Activated CD8-positive, alpha-beta memory T cell treated with anti-CD3 and anti-CD28 coated beads, Interleukin-2, amount 10 ng/mL, durations not matched to agents 7 days and 5 days (primary cell): ENCODE measurements at regions of chr19 and their contacts with region 1.

Region 1: DNA sequence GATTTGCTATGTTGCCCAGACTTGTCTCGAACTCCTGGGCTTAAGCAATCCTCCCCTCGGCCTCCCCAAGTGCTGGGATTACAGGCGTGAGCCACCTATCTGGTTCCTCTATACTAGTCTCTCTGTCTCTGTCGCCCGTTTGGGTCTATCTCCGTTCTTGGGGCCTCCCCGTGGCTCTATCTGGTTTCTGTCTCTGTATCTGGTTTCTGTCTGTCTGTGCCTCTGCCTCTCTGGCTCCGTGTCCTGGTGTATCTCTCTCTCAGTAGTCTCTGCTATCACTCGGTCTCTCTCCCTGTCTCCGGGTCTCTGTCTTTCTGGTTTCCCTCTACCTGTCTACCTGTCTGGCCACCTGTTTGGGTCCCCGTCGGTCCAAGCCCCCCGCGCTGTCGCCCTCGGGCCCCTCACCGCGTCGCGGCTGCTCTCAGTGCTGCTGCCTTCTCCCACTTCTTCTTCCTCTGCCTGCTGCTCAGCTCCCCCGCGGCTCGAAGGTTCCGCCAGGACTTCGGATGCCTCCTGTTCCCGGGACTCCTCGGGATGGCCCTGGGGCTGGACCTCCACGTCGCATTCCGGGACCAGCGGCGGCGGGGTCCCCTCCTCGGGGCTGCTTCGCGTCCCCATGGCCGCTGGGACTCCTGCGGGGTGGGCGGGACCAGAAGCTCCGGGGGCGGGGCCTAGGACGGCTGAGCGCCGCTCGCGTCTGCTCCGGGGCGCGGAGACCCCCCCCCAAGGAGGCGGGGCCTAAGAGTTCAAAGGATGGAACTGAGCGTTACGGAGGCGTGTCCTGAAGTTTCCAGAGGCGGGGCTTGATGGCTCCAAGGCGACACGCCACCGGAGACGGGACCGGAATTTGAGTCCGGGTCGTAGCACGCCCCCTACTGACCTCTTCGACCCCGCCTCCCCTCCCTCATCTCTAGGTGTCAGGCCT is 783 bp downstream of the PHLDB3 start:
- DNase-seq: peak; percentile 99
- ATAC-seq: peak; percentile 95
- H3K4me3 Mint-ChIP-seq: peak overlapping the region; percentile 97
- H3K27ac Mint-ChIP-seq: peak overlapping the region; percentile 91
- H3K4me1 Mint-ChIP-seq: peaks cover 21% of the 10 kb centered on the region
- H3K27me3 Mint-ChIP-seq: no peaks in the 10 kb centered on the region

Region 2: DNA sequence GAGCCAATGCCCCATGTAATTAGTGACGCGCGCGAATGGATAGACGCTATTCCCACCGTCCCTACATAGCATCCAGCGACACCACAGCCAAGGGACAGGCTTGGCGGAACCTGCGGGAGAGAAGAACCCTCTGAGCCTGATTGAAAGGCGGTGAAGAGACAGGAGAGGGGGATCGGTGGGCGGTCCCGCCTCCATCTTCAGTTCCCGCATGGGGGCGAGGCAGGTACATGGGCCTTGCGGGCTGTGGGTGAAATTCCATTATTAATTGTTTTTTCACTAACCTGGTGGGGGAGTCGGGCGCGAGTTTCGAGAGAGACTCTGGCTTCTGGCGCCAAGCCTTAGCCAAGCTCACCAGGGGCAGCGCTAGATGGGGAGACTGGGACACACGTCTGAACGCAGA is 97.5 kb before region 1 on chr19:
- CTCF ChIA-PET with region 1: no interaction called
- DNase-seq: no peak
- ATAC-seq: no peak
- H3K4me3 Mint-ChIP-seq: no peak overlapping the region
- H3K27ac Mint-ChIP-seq: no peak overlapping the region
- H3K4me1 Mint-ChIP-seq: no peaks in the 10 kb centered on the region
- H3K27me3 Mint-ChIP-seq: peaks cover 9% of the 10 kb centered on the region

Region 3: DNA sequence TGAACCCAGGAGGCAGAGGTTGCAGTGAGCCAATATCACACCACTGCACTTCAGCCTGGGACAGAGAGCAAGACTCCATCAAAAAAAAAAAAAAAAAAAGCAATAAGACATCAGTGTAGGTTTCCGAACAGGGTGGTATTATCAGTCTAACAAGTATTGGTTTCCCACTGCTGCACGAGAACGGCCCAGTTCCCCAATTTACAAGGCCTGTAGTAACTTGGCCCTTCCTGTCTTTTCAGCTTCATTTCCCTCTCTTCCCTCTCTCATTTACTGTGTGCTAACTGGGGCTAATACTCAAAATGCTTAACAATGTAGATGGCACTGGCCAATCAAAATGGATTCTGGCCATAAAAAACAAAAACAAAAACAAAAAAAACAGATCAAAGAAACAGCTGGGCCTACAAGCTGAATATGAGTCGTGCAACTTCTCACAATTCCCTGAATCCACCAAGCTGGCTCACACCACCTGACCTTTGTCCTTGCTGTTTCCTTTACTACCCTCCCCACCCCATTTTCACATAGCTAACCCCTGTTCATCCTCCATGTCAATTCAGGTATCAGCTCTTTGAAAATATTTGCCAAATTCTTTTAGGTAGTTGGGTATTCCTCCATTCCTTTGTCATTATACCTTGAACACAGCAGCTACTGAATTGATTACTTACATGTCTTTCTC is 86.7 kb before region 1 on chr19:
- CTCF ChIA-PET with region 1: no interaction called
- DNase-seq: no peak
- ATAC-seq: no peak
- H3K4me3 Mint-ChIP-seq: no peak overlapping the region
- H3K27ac Mint-ChIP-seq: no peak overlapping the region
- H3K4me1 Mint-ChIP-seq: no peaks in the 10 kb centered on the region
- H3K27me3 Mint-ChIP-seq: peaks cover 9% of the 10 kb centered on the region

Region 4: GRCh38 chr19:43433358-43433673 is 70.4 kb before region 1 on chr19:
- CTCF ChIA-PET with region 1: interaction called, 11 read pairs
- DNase-seq: no peak
- ATAC-seq: no peak
- H3K4me3 Mint-ChIP-seq: no peak overlapping the region
- H3K27ac Mint-ChIP-seq: no peak overlapping the region
- H3K4me1 Mint-ChIP-seq: peaks cover 18% of the 10 kb centered on the region
- H3K27me3 Mint-ChIP-seq: no peaks in the 10 kb centered on the region

Region 5: DNA sequence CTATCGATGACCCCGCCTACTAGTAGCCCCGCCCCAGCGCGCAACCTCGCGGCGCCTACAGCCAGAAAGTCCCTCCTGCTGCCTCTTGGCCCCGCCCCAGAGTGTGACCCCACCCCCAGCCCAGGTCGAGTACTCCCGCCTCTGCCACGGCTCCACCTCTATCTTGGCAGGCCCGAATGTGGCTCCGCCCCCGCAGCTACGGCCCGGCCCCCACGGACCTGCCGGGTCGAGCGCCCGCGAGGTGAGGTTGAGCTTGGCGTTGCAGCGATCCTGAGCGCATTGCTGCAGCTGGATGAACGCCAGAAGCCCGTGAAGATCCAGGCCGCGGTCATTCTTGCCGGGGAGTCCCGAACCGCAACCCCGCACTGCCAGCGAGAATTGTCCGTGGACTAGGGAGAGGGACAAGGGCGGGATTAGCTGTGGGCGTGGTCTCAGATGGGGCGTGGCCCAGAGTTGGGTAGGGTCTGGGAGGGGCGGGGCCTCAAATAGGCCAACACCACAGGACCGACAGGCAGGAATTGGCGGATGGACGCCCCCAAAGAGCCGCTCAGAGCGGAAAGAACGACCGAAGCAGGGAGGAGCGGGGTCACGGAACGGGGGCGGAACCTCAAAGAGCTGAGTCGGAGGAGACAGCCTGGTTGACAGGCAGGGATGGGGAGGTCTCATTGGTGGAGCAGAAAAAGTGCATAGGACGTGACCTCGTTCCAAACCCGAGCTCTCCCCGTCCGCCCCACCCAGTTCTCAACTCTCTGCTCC is 40.2 kb before region 1 on chr19:
- CTCF ChIA-PET with region 1: interaction called, 15 read pairs
- DNase-seq: peak; percentile 99
- ATAC-seq: peak; percentile 92
- H3K4me3 Mint-ChIP-seq: peak overlapping the region; percentile 90
- H3K27ac Mint-ChIP-seq: peak overlapping the region; percentile 90
- H3K4me1 Mint-ChIP-seq: peaks cover 27% of the 10 kb centered on the region
- H3K27me3 Mint-ChIP-seq: peaks cover 4% of the 10 kb centered on the region

Region 6: DNA sequence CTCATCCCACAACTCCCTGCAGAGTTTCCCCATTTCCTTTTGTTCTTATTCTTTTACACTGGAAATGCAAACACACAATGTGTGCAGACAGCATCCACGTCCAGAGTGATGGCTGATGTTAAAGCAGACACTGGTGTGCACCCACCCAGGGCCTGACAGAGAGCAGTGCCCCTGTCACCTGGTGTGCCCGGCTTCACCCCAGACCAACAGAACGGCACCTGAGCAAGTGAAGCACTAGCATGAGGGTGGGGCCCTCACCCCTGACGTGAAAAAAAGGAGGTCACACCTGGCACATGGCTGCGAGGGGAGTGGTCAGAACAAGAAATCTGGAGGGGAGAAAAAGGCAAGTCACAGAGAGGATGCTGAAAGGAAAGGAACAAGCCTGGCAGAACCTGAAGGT is 41.5 kb after region 1 on chr19:
- CTCF ChIA-PET with region 1: no interaction called
- DNase-seq: no peak
- ATAC-seq: no peak
- H3K4me3 Mint-ChIP-seq: no peak overlapping the region
- H3K27ac Mint-ChIP-seq: peak overlapping the region; percentile 1
- H3K4me1 Mint-ChIP-seq: no peaks in the 10 kb centered on the region
- H3K27me3 Mint-ChIP-seq: no peaks in the 10 kb centered on the region

Region 7: DNA sequence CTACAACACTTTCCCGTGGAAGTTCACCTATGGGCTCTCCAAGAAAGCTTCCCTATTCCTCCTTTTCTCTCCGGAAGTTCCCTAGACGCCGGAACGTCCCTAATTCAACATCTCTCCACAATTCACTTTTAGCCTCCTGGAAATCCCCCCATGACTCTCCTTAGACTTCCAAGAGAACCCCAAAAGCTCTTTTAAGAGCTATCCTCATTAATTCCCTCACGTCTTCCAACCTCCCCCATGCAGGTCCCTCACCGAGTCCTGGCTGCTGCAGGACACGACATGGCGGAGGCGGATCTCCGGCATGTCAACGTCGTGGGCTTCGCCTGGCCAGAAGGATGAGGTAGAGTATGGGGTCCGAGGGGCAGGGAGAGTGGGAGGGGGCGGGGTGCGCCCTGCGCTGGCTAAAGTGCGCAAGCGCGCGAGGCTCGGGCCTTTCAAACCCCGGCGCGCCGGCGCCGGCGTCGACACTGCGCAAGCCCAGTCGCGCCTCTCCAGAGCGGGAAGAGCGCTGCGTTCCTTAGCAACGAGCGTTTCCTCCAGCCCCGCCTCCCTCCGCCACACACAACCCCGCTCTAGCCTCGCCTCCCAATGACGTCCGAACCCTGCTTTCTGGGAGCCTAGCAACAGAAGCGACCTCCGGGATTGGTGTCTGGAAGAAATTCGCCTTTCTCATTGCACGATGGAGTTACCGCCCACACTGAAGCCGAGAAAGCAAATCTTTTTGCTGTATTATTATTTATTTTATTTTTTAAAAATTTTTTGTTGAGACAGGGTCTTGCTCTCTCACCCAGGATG is 71.6 kb after region 1 on chr19 and contains the starts of genes PINLYP and XRCC1:
- CTCF ChIA-PET with region 1: no interaction called
- DNase-seq: peak; percentile 99
- ATAC-seq: peak; percentile 97
- H3K4me3 Mint-ChIP-seq: peak within 1 kb of the TSS; percentile 95
- H3K27ac Mint-ChIP-seq: peak within 1 kb of the TSS; percentile 92
- H3K4me1 Mint-ChIP-seq: peaks cover 45% of the 10 kb centered on the region
- H3K27me3 Mint-ChIP-seq: no peaks in the 10 kb centered on the region
- total RNA-seq, gene PINLYP: 16.8 to 19.7 TPM
- total RNA-seq, gene XRCC1: 47.7 to 50.6 TPM